BJ (cell line): ENCODE measurements at regions of chr18 and their contacts with region 1.

Region 1: DNA sequence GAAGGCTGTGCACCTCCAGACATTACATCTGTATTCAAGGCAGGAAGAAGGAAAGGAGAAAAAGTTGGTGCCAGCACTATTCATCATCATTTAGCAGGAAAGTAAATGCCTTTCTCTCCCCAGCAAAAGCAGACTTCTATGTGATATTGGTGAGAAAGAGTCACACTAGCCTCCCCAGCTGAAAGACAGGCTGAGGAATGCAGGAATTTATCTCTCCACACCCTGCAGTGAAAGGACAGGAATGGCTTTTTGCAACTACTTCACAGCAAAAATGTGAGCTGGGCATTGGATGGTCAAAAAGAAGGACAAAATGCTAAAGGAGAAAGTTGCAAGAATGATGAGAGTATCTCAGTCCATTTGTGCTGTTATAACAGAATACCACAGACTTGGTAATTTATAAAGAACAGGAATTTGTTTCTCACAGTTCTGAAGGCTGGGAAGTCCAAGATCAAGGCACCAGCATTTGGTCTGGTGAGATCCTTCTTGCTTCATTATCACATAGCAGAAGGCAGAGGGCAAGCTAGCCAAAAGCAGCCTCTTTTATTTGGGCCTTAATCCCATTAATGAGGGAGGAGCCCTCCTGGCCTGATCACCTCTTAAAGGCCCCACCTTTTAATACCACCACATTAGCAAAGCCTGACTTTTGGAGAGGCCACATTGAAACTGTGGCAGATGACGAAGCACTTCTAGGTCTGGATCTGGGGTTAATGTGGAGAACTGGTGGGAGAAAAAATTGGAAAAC is 388.1 kb upstream of the SLC14A2 start:
- DNase-seq: no peak
- H3K4me3 ChIP-seq: no peak overlapping the region
- H3K27me3 ChIP-seq: no peaks in the 10 kb centered on the region
- CTCF ChIP-seq: no peak

Region 2: DNA sequence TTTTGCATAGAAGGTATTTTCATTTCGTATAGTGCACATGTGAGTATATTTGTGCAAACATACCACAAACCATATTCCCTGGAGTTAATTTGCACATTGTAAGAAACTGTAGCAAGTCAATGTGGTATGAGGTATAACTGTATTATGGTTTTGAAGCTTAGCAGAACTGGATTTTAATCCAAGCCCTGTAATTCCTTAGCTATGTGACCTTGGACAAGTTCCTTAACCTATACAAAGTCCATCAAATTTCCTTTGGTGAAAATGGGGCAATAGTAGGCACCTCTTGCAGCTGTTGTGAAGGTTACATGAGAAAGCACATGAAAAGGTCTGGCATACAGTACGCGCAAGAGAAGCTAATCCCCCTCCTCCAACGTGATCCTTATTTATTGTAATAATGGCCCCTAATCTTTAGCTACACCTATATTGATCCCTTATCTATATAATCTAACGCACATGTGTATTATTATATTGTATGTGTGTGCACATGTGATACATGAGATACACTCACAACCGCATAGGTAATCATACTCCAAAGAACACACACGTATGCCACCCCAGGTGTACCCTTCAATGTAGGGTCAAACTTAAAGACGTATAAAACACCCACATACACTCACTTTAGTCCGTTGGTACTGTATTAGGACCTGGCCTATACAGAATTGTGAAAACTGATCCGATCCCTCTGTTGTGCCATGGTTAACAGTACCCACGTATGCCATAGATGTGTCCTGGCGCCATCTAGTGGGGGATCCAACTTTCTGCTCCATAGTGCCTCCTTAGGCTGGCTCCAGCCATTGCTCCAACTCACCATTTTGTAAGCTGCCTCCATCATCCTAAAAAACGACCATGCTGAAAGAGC is 14.8 kb before region 1 on chr18:
- CTCF ChIA-PET with region 1: interaction called, 25 read pairs
- POLR2A ChIA-PET with region 1: no interaction called
- DNase-seq: no peak
- H3K4me3 ChIP-seq: no peak overlapping the region
- H3K27me3 ChIP-seq: no peaks in the 10 kb centered on the region
- CTCF ChIP-seq: peak; percentile 99